ENCODE measurements at regions of chr2 and their contacts with region 1.

Region 1: DNA sequence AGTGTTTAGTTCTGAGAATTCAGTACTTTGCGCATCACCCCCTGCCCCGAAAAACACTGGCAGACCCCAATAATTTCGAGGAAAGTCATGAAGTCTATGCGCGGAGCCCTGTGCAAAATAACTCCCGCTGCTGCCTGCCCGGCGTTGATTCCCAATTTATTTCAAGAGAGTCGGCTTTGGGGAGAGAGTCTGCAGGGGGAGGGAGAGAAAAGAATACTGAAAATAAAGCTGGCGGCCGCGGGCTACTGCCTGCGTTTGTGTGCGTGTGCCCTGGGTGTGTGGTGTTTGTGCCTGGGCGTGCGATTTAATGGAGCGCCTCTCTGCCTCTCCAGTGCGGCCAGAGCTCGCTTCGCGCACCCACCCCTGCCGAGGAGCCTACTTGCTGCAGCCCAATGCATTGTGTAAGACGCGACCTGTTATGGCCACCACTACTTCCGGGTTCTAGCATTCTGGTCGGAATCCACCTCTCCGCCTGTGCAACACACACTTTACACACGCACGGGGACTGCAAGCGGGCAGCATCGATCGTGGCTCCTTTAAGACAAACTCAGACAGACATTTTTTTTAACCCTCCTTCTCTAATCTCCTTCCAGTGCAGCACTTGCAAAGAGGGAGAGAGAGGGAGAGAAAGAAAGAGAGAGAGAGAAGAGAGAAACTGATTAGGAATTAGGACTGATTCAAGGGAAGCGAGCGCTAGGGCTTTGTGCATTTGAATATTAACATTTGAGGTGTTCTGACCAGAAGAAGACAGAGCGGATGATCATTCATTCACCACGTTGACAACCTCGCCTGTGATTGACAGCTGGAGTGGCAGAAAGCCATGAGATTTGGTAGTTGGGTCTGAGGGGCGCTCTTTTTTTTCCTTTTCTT is at the start of gene MEIS1:
- DNase-seq: peak; percentile 92
- H3K4me3 ChIP-seq: peak within 1 kb of the TSS; percentile 47 to 50
- H3K27ac ChIP-seq: peak within 1 kb of the TSS; percentile 87 to 89
- H3K4me1 ChIP-seq: no peaks in the 10 kb centered on the region
- H3K27me3 ChIP-seq: peaks cover 6% of the 10 kb centered on the region
- CTCF ChIP-seq: no peak
- POLR2A ChIP-seq: peak; percentile 88
- total RNA-seq, gene MEIS1: 15.4 to 23.7 TPM

Region 2: GRCh38 chr2:66389651-66390131 is 45.2 kb before region 1 on chr2:
- intact Hi-C with region 1: no loop called
- DNase-seq: no peak
- H3K4me3 ChIP-seq: no peak overlapping the region
- H3K27ac ChIP-seq: no peak overlapping the region
- H3K4me1 ChIP-seq: no peaks in the 10 kb centered on the region
- H3K27me3 ChIP-seq: no peaks in the 10 kb centered on the region
- CTCF ChIP-seq: no peak
- POLR2A ChIP-seq: no peak

Region 3: GRCh38 chr2:66495788-66496640 is 61.1 kb after region 1 on chr2:
- intact Hi-C with region 1: no loop called
- DNase-seq: peak; percentile 80
- H3K4me3 ChIP-seq: no peak overlapping the region
- H3K27ac ChIP-seq: peak overlapping the region; percentile 55 to 61
- H3K4me1 ChIP-seq: peaks cover 10% of the 10 kb centered on the region
- H3K27me3 ChIP-seq: no peaks in the 10 kb centered on the region
- CTCF ChIP-seq: peak in 2 of 4 experiments; percentile 25 to 40
- POLR2A ChIP-seq: no peak

Region 4: GRCh38 chr2:66574701-66575624 is 140.0 kb after region 1 on chr2:
- intact Hi-C with region 1: loop called (anchors 2 kb)
- DNase-seq: peak; percentile 63
- H3K4me3 ChIP-seq: peak overlapping the region; percentile 36 to 39
- H3K27ac ChIP-seq: peak overlapping the region; percentile 79 to 89
- H3K4me1 ChIP-seq: peaks cover 7% of the 10 kb centered on the region
- H3K27me3 ChIP-seq: peaks cover 13% of the 10 kb centered on the region
- CTCF ChIP-seq: peak in 2 of 4 experiments; percentile 46 to 52
- POLR2A ChIP-seq: no peak

Region 5: DNA sequence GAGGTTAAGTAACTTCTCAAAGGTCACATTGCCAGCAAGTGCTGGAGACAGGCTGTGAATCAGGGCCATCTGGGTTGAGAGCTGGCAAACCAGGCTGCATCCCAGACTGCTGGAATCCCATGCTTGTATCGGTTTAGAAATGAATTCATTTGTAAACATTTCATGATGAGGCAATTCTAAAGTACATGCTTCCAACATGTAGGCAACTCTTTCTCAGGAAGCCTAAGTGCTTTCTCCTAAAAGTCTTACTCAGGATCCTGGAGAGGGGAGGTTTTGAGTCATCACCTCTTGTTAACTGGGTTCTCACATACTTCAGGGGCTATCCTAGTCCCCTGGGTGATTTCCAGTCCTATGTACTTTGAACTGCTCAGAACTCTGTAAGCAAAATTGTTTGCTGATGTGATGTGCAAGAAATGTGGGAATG is 416.5 kb after region 1 on chr2:
- intact Hi-C with region 1: loop called (anchors 10 kb)
- DNase-seq: no peak
- H3K4me3 ChIP-seq: no peak overlapping the region
- H3K27ac ChIP-seq: no peak overlapping the region
- H3K4me1 ChIP-seq: peaks cover 3% of the 10 kb centered on the region
- H3K27me3 ChIP-seq: no peaks in the 10 kb centered on the region
- CTCF ChIP-seq: no peak
- POLR2A ChIP-seq: no peak

Region 6: DNA sequence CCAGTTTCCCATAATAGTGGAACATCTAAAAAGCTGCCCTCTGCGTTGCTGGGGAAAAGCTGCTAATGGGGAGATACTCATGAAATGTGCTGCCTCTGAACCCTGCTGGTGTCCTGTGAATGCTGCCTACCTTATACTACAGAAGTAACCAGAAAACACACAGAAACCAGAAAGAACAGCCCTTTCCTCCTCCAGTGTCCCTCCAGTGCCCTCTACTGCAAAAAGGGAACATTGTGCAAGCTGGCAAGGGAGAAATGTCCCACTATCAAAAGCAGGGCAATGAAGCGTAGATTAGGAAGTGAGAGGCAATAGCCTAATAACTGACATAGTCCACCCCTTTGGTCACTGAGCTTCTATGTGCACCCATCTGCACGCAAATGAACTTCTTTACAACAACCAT is 799.5 kb after region 1 on chr2:
- intact Hi-C with region 1: loop called (anchors 10 kb)
- DNase-seq: no peak
- H3K4me3 ChIP-seq: no peak overlapping the region
- H3K27ac ChIP-seq: no peak overlapping the region
- H3K4me1 ChIP-seq: no peaks in the 10 kb centered on the region
- H3K27me3 ChIP-seq: no peaks in the 10 kb centered on the region
- CTCF ChIP-seq: peak in 1 of 4 experiments; percentile 23
- POLR2A ChIP-seq: no peak

Region 7: GRCh38 chr2:67397143-67397986 is 962.5 kb after region 1 on chr2 and contains the start of gene ETAA1:
- intact Hi-C with region 1: loop called (anchors 5 kb)
- DNase-seq: peak; percentile 90
- H3K4me3 ChIP-seq: peak within 1 kb of the TSS; percentile 96 to 98
- H3K27ac ChIP-seq: peak within 1 kb of the TSS; percentile 95 to 96
- H3K4me1 ChIP-seq: no peaks in the 10 kb centered on the region
- H3K27me3 ChIP-seq: no peaks in the 10 kb centered on the region
- CTCF ChIP-seq: peak in 1 of 4 experiments; percentile 5
- POLR2A ChIP-seq: peak; percentile 77
- total RNA-seq, gene ETAA1: 14.5 to 14.6 TPM

Region 8: GRCh38 chr2:67650291-67651133 is 1215.6 kb after region 1 on chr2:
- intact Hi-C with region 1: loop called (anchors 5 kb)
- DNase-seq: peak; percentile 54
- H3K4me3 ChIP-seq: no peak overlapping the region
- H3K27ac ChIP-seq: no peak overlapping the region
- H3K4me1 ChIP-seq: no peaks in the 10 kb centered on the region
- H3K27me3 ChIP-seq: no peaks in the 10 kb centered on the region
- CTCF ChIP-seq: peak in 3 of 4 experiments; percentile 39 to 69 (median 58)
- POLR2A ChIP-seq: no peak

Measured in prostate gland (tissue), 2 donors.